Spleen (tissue), 13 donors: ENCODE measurements at regions of chr12 and their contacts with region 1.

Region 1: DNA sequence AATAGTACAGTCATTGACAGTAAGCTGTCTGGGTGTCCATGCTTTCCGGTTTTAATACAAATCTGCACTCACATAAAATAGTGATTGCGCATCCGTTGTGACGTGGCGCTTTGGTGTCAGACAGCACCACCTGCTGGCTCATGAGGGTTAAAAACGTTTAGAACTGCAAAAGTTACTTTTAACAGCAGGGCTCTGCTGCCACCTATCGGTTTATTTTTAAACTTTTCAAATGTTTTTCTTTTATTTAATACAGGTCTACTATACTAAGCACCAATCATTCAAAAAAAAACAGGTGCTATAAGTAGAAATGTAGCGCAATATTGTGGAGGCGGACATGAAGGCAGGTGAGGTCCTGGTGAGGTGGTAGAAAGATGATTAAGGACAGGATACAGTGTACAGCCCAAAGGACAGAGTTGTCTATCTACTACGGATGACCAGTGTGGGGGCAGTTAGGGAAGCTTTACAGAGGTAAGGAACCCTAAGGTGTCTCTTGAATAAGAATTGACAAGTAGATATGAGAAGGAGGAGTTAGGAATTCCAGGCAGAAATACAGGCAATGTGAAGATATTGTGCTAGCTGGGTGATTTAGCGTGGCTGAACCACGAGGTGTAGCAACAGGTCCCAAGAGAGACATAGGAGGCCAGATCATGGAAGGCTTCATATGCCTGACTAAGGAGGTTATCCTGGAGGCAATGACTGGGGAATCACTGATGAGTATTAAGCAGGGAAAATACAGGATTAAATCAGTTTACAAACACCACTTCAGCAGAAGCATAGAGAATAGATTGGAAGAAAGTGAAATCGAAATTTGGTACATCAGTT is 91.5 kb upstream of the PRB2 start:
- DNase-seq: peak; percentile 83
- H3K4me3 ChIP-seq: peak overlapping the region in 1 of 8 donors; percentile 10
- H3K27ac ChIP-seq: no peak overlapping the region
- H3K4me1 ChIP-seq: peaks cover 0 to 10% (median 0%) of the 10 kb centered on the region in 6 donors
- H3K27me3 ChIP-seq: no peaks in the 10 kb centered on the region
- CTCF ChIP-seq: peak; percentile 63 to 94 (median 90)
- POLR2A ChIP-seq: no peak

Region 2: DNA sequence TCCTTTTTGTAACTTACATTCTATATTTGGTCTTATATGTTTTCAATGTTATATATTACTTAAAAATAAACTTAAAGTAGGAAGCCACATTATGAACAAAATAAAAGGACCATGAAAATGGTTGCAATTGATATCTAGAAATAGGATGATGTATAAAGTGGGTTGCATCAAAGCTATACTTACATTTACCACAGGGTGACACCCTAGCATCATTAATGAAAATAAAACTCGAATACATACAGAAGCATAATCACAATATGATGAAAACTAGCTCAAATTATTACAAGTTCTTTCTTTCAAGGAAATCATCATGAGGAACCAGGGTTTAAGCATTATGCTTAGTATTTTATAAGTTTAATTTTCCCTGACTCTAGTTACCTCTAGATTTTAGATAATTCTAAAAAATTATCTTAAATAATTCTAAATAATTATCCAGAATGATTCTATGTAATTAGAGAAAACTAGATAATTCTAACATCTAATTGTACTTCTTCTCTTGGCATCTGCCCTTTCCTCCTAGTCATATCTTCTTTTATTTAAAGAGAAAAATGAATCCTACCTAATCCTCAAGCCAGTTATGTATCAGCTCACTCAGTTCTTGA is 715.6 kb before region 1 on chr12:
- intact Hi-C with region 1: loop called (anchors 5 kb)
- DNase-seq: no peak
- H3K4me3 ChIP-seq: no peak overlapping the region
- H3K27ac ChIP-seq: no peak overlapping the region
- H3K4me1 ChIP-seq: no peaks in the 10 kb centered on the region
- H3K27me3 ChIP-seq: peaks cover 0 to 52% (median 2%) of the 10 kb centered on the region in 7 donors
- CTCF ChIP-seq: peak; percentile 52 to 82 (median 67)
- POLR2A ChIP-seq: no peak

Region 3: DNA sequence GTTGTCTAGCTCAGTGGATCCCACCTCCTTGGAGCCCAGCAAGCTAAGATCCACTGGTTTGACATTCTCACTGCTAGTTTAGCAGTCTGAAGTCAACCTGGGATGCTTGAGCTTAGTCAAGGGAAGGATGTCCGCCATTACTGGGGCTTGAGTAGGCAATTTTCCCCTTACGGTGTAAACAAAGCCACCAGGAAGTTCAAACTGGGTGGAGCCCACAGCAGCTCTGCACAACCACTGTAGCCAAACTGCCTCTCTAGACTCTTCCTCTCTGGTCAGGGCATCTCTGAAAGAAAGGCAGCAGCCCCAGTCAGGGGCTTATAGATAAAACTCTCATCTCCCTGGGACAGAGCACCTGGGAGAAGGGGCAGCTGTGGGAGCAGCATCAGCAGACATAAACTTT is 378.0 kb before region 1 on chr12:
- intact Hi-C with region 1: no loop called
- DNase-seq: no peak
- H3K4me3 ChIP-seq: no peak overlapping the region
- H3K27ac ChIP-seq: no peak overlapping the region
- H3K4me1 ChIP-seq: no peaks in the 10 kb centered on the region
- H3K27me3 ChIP-seq: no peaks in the 10 kb centered on the region
- CTCF ChIP-seq: no peak
- POLR2A ChIP-seq: no peak

Region 4: DNA sequence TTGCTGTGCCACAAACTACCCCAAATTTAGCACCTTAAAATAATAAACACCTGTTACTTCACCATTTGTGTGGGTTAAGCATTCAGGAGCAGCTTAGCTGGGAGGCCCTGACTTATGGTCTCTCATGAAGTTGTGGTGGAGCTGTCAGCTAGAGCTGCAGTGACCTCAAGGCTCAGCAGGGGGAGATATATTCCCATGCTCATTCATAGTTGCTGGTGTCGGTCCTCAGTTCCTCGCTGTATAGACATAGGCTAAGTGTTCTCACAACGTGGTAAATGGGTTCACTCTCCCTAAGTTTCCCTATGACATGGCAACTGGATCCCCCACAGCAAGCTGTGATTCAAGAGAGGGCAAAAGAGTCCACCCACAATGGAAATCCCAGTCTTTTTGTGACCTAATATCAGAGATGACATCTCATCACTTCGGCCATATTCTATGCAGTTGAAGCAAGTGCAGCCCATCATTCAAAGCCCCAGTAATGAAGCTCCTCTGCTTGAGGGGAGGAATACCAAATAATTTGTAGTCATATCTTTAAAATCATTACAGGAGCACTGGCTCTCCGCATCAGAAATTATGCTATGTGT is 258.4 kb before region 1 on chr12:
- intact Hi-C with region 1: loop called (anchors 5 kb)
- DNase-seq: no peak
- H3K4me3 ChIP-seq: no peak overlapping the region
- H3K27ac ChIP-seq: no peak overlapping the region
- H3K4me1 ChIP-seq: no peaks in the 10 kb centered on the region
- H3K27me3 ChIP-seq: no peaks in the 10 kb centered on the region
- CTCF ChIP-seq: peak in 9 of 11 experiments; percentile 12 to 64 (median 43)
- POLR2A ChIP-seq: no peak

Region 5: DNA sequence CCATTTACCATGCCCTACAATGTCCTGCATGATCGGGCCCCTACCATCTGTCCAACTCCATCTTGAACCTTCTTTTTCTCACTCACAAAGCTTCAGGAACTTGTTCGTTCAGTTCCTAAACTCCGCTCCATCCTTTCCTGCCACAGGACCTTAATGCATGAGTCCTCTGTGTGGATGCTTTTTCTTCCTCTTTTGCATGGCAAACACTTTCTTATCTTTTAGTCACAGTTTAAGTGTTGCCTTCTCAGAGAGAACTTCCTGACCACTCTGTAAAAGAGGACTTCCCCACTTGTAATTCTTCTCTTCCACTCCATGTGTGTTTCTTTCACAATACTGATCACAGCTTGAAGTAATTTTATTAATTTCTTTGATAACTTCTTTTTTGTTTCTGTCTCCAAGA is 108.2 kb after region 1 on chr12:
- intact Hi-C with region 1: no loop called
- DNase-seq: no peak
- H3K4me3 ChIP-seq: no peak overlapping the region
- H3K27ac ChIP-seq: peak overlapping the region in 1 of 8 donors; percentile 12
- H3K4me1 ChIP-seq: peaks cover 0 to 23% (median 5%) of the 10 kb centered on the region in 6 donors
- H3K27me3 ChIP-seq: no peaks in the 10 kb centered on the region
- CTCF ChIP-seq: no peak
- POLR2A ChIP-seq: no peak

Region 6: DNA sequence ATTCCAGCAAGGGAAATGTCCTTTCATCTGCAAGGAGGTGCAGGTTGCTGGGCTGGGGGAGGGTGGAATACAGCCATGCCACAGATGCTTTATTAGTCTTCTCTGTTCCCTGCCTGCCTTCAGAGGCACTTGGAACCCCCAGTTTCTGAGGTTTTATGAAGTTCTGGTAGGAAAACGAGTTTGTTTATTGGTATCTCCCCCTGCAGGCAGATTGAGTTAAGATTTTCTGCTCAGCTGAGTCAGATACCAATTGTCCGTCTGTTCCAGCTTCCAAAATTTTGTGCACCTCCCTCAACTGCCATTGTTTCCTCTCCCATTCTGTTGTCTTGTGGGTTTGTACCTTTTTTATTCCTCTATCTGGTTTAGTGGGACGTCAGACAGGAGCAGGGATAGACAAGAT is 318.2 kb after region 1 on chr12:
- intact Hi-C with region 1: no loop called
- DNase-seq: no peak
- H3K4me3 ChIP-seq: no peak overlapping the region
- H3K27ac ChIP-seq: peak overlapping the region in 1 of 8 donors; percentile 2
- H3K4me1 ChIP-seq: peaks cover 6 to 85% (median 49%) of the 10 kb centered on the region in 6 donors
- H3K27me3 ChIP-seq: no peaks in the 10 kb centered on the region
- CTCF ChIP-seq: peak in 1 of 11 experiments; percentile 5
- POLR2A ChIP-seq: no peak